ENCODE measurements at regions of chr19 and their contacts with region 1.

Region 1: GRCh38 chr19:55503502-55504251 is 15.4 kb downstream of the SSC5D start:
- DNase-seq: peak; percentile 99
- H3K27ac ChIP-seq: peak overlapping the region; percentile 57
- CTCF ChIP-seq: peak; percentile 97

Region 2: DNA sequence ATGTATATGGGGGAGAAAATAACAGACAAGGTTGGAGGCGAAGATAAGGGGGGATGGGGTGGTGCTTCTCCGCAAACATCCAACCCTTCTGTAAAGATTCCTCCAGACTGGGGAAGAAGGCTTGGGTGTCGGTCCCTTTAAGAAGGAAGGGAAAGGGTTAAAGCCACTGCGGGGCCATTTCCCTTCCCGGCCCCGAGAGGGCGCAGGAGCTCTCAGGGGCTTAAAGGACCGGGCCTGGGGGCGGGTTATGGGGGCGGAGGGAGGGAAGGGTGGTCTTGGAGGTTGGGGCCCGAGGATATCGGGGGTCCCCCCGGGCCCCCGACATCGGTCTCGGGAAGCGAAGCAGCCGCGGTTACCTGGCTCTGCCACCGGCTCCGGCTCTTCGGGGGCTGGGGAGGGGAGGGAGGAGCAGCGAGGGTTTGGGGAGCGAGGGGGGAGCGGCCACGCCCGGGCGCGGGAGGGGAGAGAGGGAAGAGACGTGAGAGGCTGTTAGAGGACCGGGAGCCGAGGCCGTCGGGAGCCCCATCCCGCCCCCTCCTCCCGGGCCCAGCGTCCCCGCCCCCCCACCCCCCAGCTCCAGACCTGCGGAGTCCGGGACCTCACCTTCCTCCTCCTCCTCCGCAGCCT is 357.5 kb before region 1 on chr19:
- CTCF ChIA-PET with region 1: interaction called, 11 read pairs
- POLR2A ChIA-PET with region 1: no interaction called
- DNase-seq: peak; percentile 73
- H3K27ac ChIP-seq: peak overlapping the region; percentile 83
- CTCF ChIP-seq: peak; percentile 83

Region 3: DNA sequence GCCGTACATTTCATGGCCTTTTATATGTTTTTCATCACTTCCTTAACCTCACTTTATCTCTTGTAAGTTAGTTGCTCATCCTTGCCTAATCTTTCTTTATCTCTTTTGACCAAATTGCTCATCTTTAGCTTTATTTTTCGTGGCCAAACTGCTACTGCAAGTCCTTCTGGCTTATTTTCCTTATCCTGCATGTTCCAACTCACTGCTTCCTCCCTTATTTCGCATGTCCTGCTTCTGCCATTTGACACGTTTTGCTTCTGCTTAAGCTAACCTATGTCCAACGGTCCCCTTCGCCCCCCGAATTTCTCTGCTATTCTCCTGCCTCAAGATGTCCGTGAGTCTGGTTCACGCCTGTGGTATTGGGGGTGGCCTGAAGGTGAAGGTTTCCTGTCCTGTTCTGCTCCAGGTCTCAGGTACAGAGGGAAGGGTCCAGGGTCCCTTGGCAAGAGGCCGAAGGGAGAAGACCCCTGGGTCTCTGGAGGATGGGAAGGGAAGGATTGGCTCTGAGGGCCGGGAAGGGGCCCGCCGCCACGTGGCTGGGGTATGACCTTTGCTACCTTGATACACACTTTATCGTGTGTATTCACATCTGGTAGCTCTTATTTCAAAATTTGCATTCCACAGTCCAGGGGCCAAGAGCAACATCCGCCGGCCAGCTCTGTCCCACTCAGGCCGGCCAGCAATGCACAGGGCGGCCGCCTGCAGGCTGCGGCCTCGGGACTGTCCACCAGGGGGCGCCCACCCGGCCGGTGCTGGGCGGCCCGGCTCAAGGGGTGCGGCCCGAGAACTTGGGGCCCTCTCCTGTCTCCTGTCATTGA is 36.2 kb before region 1 on chr19:
- CTCF ChIA-PET with region 1: interaction called, 43 read pairs
- POLR2A ChIA-PET with region 1: no interaction called
- DNase-seq: peak; percentile 61
- H3K27ac ChIP-seq: no peak overlapping the region
- CTCF ChIP-seq: peak; percentile 99

Region 4: GRCh38 chr19:55492362-55492944 is 11.2 kb before region 1 on chr19:
- CTCF ChIA-PET with region 1: interaction called, 11 read pairs
- POLR2A ChIA-PET with region 1: no interaction called
- DNase-seq: no peak
- H3K27ac ChIP-seq: peak overlapping the region; percentile 99
- CTCF ChIP-seq: no peak

Region 5: DNA sequence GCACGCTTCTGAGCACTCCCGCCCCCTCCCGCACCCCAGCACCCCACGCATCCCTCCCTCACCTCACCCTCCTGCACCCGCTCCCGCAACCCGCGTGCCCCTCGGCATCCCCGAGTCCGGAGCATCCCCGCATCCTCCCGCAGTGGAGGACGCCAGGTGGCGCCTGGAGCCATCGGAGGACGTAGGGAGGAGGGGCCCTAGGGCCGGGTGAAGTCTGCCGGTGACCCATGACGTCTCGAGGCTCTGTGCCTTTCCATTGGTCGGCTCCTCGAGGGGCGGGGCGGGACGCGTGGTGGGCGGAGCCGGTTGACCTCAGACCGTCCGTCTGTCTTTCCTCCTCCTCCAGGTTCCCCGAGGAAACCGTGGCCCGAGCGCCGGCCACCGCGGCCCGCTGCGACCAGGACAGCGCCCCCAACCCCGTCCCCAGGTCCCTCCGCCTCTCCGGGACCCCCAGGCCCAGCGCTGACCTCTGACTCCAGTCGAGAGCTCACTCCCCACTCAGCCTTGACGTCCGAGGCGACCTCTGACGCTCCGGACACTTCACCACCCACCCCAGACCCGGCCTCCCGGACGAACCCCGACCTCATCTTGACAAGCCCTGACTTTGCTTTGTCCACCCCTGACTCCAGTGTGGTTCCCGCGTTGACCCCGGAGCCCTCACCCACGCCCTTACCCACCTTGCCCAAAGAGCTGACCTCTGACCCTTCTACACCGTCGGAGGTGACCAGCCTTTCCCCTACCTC is 13.4 kb after region 1 on chr19:
- CTCF ChIA-PET with region 1: interaction called, 10 read pairs
- POLR2A ChIA-PET with region 1: no interaction called
- DNase-seq: peak; percentile 100
- H3K27ac ChIP-seq: peak overlapping the region; percentile 73
- CTCF ChIP-seq: peak; percentile 88

Region 6: DNA sequence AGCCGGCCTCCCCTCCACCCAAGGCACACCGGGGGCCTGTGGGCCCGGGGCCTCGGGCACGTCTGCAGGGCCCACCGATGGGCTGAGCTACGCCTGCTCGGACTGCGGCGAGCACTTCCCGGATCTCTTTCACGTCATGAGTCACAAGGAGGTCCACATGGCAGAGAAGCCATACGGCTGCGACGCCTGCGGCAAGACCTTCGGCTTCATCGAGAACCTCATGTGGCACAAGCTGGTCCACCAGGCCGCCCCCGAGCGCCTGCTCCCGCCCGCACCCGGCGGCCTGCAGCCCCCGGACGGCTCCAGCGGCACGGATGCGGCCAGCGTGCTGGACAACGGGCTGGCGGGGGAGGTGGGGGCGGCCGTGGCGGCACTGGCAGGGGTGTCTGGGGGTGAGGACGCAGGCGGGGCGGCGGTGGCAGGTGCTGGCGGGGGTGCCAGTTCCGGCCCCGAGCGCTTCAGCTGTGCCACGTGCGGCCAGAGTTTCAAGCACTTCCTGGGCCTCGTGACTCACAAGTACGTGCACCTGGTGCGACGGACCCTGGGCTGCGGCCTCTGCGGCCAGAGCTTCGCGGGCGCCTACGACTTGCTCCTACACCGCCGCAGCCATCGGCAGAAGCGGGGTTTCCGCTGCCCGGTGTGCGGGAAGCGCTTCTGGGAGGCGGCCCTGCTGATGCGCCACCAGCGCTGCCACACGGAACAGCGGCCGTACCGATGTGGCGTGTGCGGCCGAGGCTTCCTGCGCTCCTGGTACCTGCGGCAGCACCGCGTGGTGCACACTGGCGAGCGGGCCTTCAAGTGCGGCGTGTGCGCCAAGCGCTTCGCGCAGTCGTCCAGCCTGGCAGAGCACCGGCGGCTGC is 112.1 kb after region 1 on chr19:
- CTCF ChIA-PET with region 1: no interaction called
- POLR2A ChIA-PET with region 1: no interaction called
- DNase-seq: no peak
- H3K27ac ChIP-seq: no peak overlapping the region
- CTCF ChIP-seq: no peak

Measured in RWPE1 (cell line).